ENCODE measurements at regions of chr10 and their contacts with region 1.

Region 1: GRCh38 chr10:97096261-97097083 is 89.3 kb downstream of the SLIT1 start:
- DNase-seq: peak; percentile 5 to 77 (median 36)
- H3K4me3 ChIP-seq: no peak overlapping the region
- H3K4me3 Mint-ChIP-seq: peak overlapping the region; percentile 61 to 89 (median 78)
- H3K27ac ChIP-seq: peak overlapping the region; percentile 24
- H3K27ac Mint-ChIP-seq: peak overlapping the region; percentile 70 to 94 (median 87)
- H3K4me1 ChIP-seq: peaks cover 22% of the 10 kb centered on the region
- H3K4me1 Mint-ChIP-seq: peaks cover 37 to 44% (median 43%) of the 10 kb centered on the region in 3 donors
- H3K27me3 ChIP-seq: no peaks in the 10 kb centered on the region
- H3K27me3 Mint-ChIP-seq: peaks cover 0 to 1% of the 10 kb centered on the region in 2 donors

Region 2: DNA sequence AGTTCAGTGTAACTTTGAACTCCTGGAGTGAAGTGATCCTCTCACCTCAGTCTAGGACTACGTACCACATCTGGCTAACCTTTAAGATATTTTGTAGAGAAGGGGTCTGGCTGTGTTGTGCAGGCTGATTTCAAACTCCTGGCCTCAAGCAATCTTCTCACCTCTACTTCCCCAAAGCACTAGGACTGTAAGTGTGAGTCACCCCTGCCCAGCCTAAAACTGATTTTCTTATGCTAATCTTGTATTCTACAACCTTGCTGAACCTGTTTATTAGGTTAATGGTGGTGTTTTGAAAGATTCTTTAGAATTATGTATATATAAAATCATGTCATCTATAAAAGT is 206.3 kb before region 1 on chr10:
- CTCF ChIA-PET with region 1: no interaction called
- POLR2A ChIA-PET with region 1: no interaction called
- DNase-seq: no peak
- H3K4me3 ChIP-seq: no peak overlapping the region
- H3K4me3 Mint-ChIP-seq: no peak overlapping the region
- H3K27ac ChIP-seq: no peak overlapping the region
- H3K27ac Mint-ChIP-seq: peak overlapping the region in 3 of 8 donors; percentile 52 to 78 (median 57)
- H3K4me1 ChIP-seq: no peaks in the 10 kb centered on the region
- H3K4me1 Mint-ChIP-seq: peaks cover 32 to 52% (median 51%) of the 10 kb centered on the region in 3 donors
- H3K27me3 ChIP-seq: no peaks in the 10 kb centered on the region
- H3K27me3 Mint-ChIP-seq: no peaks in the 10 kb centered on the region

Region 3: DNA sequence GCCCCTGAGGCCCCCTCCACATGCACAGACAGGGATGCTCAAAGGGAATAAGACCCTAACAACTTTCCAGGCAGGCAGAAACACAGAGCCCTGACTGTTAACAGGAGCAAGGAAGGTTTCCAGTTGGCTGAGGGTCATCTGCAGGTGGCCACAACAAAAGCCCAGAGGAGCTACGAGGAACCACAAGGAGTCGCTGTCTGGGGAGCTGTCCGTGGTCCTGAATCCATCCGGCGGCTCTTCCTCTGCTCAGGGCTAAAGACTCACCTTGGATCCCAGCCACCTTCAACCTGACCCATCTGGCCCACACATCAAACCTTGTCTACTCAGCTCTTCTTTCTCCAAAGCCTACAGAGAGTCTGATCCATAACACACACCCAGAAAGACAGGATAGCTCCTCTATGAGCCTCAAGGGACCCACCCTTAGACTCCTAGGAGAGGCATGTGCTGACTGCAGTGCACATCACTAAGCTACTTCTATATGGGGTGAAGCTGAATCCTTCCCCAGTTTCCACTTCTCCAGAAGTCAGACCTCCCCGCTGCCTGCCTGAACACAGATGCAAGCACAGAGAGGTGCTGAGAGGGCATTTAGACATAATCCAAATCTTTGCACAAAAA is 14.7 kb before region 1 on chr10:
- CTCF ChIA-PET with region 1: interaction called, 17 read pairs
- POLR2A ChIA-PET with region 1: no interaction called
- DNase-seq: peak; percentile 31 to 72 (median 48)
- H3K4me3 ChIP-seq: no peak overlapping the region
- H3K4me3 Mint-ChIP-seq: no peak overlapping the region
- H3K27ac ChIP-seq: no peak overlapping the region
- H3K27ac Mint-ChIP-seq: peak overlapping the region in 1 of 8 donors; percentile 40
- H3K4me1 ChIP-seq: no peaks in the 10 kb centered on the region
- H3K4me1 Mint-ChIP-seq: no peaks in the 10 kb centered on the region
- H3K27me3 ChIP-seq: no peaks in the 10 kb centered on the region
- H3K27me3 Mint-ChIP-seq: peaks cover 10 to 55% of the 10 kb centered on the region in 2 donors

Region 4: DNA sequence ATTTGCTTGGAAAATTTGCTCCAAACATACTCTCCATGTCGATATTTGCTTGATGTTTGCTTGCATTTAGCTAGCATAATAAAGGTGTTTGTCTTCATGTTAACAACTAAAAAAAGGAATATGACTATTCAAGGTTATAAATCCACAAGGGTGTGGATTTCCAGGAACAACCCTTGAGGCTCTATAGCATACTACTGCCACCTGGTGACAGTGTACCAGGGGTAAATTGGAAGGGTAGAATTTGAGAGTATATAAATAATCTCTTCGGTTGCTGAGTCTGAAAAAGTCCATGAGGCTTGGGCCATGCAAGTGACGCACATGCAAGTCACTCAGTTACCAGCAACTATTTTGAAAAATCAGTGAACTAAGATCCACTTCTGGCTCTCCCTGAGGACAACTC is 20.9 kb after region 1 on chr10:
- CTCF ChIA-PET with region 1: no interaction called
- POLR2A ChIA-PET with region 1: no interaction called
- DNase-seq: peak in 1 of 5 donors; percentile 9
- H3K4me3 ChIP-seq: no peak overlapping the region
- H3K4me3 Mint-ChIP-seq: no peak overlapping the region
- H3K27ac ChIP-seq: no peak overlapping the region
- H3K27ac Mint-ChIP-seq: no peak overlapping the region
- H3K4me1 ChIP-seq: no peaks in the 10 kb centered on the region
- H3K4me1 Mint-ChIP-seq: no peaks in the 10 kb centered on the region
- H3K27me3 ChIP-seq: no peaks in the 10 kb centered on the region
- H3K27me3 Mint-ChIP-seq: peaks cover 1 to 24% of the 10 kb centered on the region in 2 donors